Activated CD4-positive, alpha-beta T cell treated with anti-CD3 and anti-CD28 coated beads, Interleukin-2, amount 10 ng/mL, durations not matched to agents 24 days and 14 days (primary cell): ENCODE measurements at regions of chr5 and their contacts with region 1.

Region 1: DNA sequence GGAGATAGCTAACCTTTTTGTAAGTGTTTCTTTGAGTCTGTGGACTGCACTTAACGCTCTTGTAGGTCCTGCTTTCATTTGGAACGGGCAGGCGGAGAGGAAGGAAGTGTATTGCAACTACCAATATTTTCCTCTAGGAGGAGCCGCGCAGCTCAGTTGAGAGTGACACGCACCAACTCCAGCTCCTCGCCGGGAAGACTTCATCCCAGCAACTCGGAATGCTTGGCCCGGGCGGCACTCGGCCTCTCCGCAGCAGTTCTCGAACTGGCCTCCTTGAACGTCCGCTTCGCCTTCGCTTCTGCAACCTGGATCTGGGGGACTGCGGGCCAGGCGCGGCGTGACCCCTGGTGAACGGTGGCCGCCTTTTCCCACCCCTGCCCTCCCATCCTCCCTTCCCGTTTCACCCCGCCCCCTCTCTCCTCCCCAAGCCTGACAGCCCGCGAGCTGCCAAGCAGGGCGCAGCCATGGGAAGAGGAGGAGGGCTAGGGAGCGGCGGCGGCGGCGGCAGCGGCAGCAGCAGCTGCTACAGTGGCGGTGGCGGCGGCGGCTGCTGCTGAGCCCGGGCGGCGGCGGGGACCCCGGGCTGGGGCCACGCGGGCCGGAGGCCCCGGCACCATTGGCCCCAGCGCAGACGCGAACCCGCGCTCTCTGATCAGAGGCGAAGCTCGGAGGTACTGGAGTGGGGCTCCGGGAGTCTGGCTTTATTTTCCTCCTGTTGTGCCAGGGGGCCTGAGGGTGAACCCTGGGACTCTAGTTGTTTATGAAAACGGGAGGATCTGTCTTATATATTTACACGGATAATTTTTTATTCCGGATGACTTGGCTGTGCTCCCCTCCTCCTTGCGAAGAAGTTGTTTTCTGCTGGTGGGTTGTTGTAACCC is at the start of gene GHR:
- DNase-seq: peak; percentile 74
- H3K4me3 Mint-ChIP-seq: no peak within 1 kb of the TSS
- H3K27ac Mint-ChIP-seq: no peak within 1 kb of the TSS
- H3K4me1 Mint-ChIP-seq: no peaks in the 10 kb centered on the region
- H3K27me3 Mint-ChIP-seq: peaks cover 20% of the 10 kb centered on the region
- total RNA-seq, gene GHR: not detected in 2 replicates

Region 2: DNA sequence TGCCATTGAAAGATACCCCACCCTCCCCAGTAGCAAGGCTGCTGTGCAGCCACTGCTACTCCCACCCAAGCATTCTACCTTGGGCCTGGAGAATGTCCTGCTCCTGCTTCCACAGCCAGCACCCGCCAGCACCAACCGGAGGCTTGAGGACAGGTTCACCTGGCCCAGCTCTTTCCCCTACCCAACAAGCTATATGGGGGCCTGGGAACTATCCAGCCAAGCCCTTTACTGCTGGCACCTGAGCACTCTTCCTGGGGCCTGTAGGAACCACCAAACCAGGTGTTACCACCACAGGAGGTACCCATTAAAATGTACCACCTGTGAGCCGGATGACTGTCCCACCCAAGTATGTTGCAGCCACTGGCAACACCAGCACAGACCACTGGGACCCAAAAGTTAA is 86.4 kb before region 1 on chr5:
- intact Hi-C with region 1: no loop called
- DNase-seq: no peak
- H3K4me3 Mint-ChIP-seq: no peak overlapping the region
- H3K27ac Mint-ChIP-seq: no peak overlapping the region
- H3K4me1 Mint-ChIP-seq: no peaks in the 10 kb centered on the region
- H3K27me3 Mint-ChIP-seq: no peaks in the 10 kb centered on the region

Region 3: GRCh38 chr5:42390115-42390514 is 33.4 kb before region 1 on chr5:
- intact Hi-C with region 1: no loop called
- DNase-seq: no peak
- H3K4me3 Mint-ChIP-seq: no peak overlapping the region
- H3K27ac Mint-ChIP-seq: no peak overlapping the region
- H3K4me1 Mint-ChIP-seq: no peaks in the 10 kb centered on the region
- H3K27me3 Mint-ChIP-seq: no peaks in the 10 kb centered on the region

Region 4: GRCh38 chr5:42767491-42768105 is 344.1 kb after region 1 on chr5:
- intact Hi-C with region 1: loop called (anchors 10 kb)
- DNase-seq: no peak
- H3K4me3 Mint-ChIP-seq: no peak overlapping the region
- H3K27ac Mint-ChIP-seq: no peak overlapping the region
- H3K4me1 Mint-ChIP-seq: no peaks in the 10 kb centered on the region
- H3K27me3 Mint-ChIP-seq: peaks cover 10% of the 10 kb centered on the region

Region 5: GRCh38 chr5:42889311-42889933 is 465.9 kb after region 1 on chr5:
- intact Hi-C with region 1: loop called (anchors 5 kb)
- DNase-seq: peak; percentile 89
- H3K4me3 Mint-ChIP-seq: no peak overlapping the region
- H3K27ac Mint-ChIP-seq: no peak overlapping the region
- H3K4me1 Mint-ChIP-seq: no peaks in the 10 kb centered on the region
- H3K27me3 Mint-ChIP-seq: peaks cover 14% of the 10 kb centered on the region